ENCODE measurements at regions of chr7 and their contacts with region 1.

Region 1: DNA sequence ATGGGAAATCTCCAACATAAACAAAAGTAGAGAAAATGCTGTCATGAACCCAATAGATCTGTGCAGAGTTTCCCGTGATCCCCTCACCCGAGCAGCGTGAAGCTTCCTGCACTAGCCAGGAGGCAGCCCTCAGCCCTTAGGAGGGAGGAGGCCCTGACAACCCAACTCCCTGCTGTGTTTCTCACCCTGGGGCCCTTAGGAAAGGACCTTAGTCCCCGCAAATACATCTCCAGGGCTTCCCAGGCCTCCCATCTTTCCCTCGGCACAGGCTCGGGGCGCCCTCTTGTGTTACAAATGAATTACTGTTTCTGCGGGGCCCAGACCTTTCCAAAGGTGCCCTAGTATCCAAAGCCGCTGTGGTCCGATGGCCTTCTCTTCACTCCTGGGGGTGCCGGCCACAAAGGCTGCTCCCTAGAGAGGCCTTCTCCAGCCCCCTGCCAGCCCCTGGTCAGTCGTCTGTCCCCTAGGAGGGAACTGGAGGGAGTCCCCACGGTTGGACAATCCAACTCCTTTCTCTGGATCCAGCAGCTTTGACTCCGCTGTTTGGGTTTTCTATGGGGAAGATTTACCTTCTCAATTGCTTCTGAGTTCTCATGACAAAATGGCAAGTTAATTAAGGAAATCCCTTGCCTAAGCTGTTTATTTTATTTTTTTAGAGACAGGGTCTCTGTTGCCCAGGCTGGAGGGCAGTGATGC is 49.9 kb upstream of the SH2B2 start:
- DNase-seq: peak; percentile 47 to 54
- ATAC-seq: peak; percentile 59 to 85 (median 80)
- H3K4me3 ChIP-seq: no peak overlapping the region
- H3K27ac ChIP-seq: no peak overlapping the region
- H3K4me1 ChIP-seq: peaks cover 0 to 21% (median 6%) of the 10 kb centered on the region in 9 donors
- H3K27me3 ChIP-seq: no peaks in the 10 kb centered on the region
- CTCF ChIP-seq: peak; percentile 59 to 87 (median 81)

Region 2: DNA sequence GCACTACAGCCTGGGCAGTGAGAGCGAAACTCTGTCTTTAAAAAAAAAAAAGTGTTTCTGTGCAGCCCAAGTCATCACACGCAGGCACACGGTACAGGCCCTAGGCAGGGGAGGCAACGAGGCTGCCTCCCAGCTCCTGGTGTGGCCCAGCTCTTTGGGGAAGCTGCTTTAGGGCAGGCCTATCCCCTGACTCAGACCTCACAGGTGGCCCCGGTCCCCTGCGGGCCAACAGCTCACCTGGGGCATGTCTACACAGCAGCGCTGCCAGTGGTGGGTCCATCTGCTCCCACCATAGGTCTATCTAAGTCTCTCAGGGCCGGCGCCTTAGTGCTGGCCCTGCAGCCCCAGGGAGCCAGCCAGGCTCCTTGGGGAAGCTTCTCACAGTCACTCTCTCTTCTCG is 1471.9 kb before region 1 on chr7:
- intact Hi-C with region 1: no loop called
- DNase-seq: no peak
- ATAC-seq: no peak
- H3K4me3 ChIP-seq: no peak overlapping the region
- H3K27ac ChIP-seq: no peak overlapping the region
- H3K4me1 ChIP-seq: no peaks in the 10 kb centered on the region
- H3K27me3 ChIP-seq: peaks cover 0 to 22% (median 8%) of the 10 kb centered on the region in 7 donors
- CTCF ChIP-seq: no peak

Region 3: DNA sequence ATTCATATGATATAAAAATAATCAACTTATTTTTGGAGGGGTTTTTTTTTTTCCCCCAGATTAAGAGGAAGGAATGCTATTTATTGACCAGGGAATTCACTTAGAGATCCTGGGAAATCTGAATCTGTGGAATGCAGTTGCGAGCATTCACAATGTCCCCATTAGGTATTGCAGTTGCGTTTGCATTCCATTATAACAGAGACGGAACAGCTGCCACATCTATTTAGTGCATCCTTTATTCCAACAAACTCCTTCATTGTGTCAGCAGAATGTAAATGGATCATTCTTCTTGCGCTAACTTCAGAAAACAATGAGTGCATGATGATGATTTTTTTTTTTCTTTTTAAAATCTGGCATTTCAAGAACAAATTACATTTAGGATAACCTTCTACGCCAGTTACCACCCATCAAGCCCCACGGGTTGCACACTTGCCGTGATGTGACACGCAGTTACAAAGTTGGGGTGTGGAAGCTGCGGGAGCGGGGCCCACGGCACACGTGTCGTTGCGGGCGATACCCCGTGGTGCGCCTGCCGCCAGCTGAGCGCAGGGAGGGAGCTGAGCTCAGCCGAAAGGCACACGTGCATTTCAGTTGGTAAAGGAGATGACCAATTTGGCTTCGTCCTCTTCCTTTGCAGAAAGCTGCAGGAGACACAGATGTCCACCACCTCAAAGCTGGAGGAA is 125.5 kb before region 1 on chr7:
- intact Hi-C with region 1: loop called in 1 of 10 experiments (anchors 10 kb)
- DNase-seq: no peak
- ATAC-seq: peak in 1 of 8 donors; percentile 25
- H3K4me3 ChIP-seq: no peak overlapping the region
- H3K27ac ChIP-seq: no peak overlapping the region
- H3K4me1 ChIP-seq: peaks cover 0 to 3% (median 0%) of the 10 kb centered on the region in 9 donors
- H3K27me3 ChIP-seq: no peaks in the 10 kb centered on the region
- CTCF ChIP-seq: no peak

Region 4: GRCh38 chr7:102125127-102125561 is 111.6 kb before region 1 on chr7:
- intact Hi-C with region 1: loop called in 1 of 10 experiments (anchors 10 kb)
- DNase-seq: peak; percentile 51 to 56
- ATAC-seq: peak; percentile 81 to 94 (median 88)
- H3K4me3 ChIP-seq: no peak overlapping the region
- H3K27ac ChIP-seq: peak overlapping the region in 3 of 10 donors; percentile 22 to 51 (median 26)
- H3K4me1 ChIP-seq: peaks cover 0 to 22% (median 4%) of the 10 kb centered on the region in 9 donors
- H3K27me3 ChIP-seq: no peaks in the 10 kb centered on the region
- CTCF ChIP-seq: peak in 5 of 9 donors; percentile 9 to 48 (median 43)

Region 5: GRCh38 chr7:102300643-102301233 is 64.0 kb after region 1 on chr7:
- intact Hi-C with region 1: no loop called
- DNase-seq: peak in 1 of 2 donors; percentile 40
- ATAC-seq: peak in 3 of 8 donors; percentile 24 to 35 (median 30)
- H3K4me3 ChIP-seq: peak overlapping the region in 2 of 10 donors; percentile 8 to 13
- H3K27ac ChIP-seq: no peak overlapping the region
- H3K4me1 ChIP-seq: peaks cover 0 to 30% (median 0%) of the 10 kb centered on the region in 9 donors
- H3K27me3 ChIP-seq: peaks cover 4 to 29% (median 19%) of the 10 kb centered on the region in 7 donors
- CTCF ChIP-seq: peak in 7 of 9 donors; percentile 20 to 54 (median 44)